CD8-positive, alpha-beta T cell (primary cell): ENCODE measurements at regions of chr11 and their contacts with region 1.

Region 1: GRCh38 chr11:47152953-47153950 is 23.4 kb downstream of the ARFGAP2 start:
- DNase-seq: peak in 7 of 9 experiments; percentile 21 to 74 (median 58)
- ATAC-seq: peak; percentile 55
- H3K4me3 ChIP-seq: no peak overlapping the region
- H3K4me3 Mint-ChIP-seq: peak overlapping the region; percentile 67
- H3K27ac ChIP-seq: peak overlapping the region; percentile 32 to 56
- H3K27ac Mint-ChIP-seq: peak overlapping the region; percentile 84
- H3K4me1 ChIP-seq: peaks cover 45% of the 10 kb centered on the region
- H3K4me1 Mint-ChIP-seq: peaks cover 35% of the 10 kb centered on the region
- H3K27me3 ChIP-seq: no peaks in the 10 kb centered on the region
- H3K27me3 Mint-ChIP-seq: no peaks in the 10 kb centered on the region
- CTCF ChIP-seq: peak; percentile 90

Region 2: DNA sequence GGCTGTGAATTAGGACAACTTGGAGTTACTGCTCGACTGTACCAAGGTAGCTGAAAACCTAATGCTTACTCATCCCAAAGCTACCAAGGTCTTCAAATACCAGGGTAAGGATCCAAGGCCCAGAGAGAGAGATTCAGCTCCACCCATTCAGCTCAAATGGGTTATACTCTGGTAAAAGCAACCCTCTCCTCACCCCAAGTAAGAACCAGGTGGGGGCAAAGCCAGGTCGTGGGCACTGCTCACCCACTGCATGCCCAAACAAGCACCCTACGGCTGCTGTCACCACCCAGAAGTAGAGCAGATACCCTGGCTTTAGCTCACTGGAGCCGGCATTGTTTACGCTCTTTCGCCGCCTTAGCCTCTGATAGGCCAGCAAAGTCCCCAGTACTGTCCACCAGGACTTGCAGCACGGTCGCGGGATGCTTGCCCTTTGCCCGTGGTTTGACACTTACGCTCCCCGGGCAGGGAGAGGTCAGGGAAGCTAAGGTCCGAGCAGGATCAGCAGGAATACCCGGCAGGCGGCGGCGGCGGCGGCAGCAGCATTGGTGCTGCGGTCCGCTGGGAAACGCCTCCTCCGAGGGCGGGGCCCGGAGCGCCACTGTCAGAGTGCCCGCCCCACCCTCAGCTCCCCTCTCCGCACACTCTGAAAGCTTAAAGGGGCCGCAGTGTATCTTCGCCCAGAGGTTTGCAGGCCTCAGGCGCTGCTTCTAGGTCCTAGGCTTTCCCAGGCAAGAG is 326.8 kb before region 1 on chr11:
- CTCF ChIA-PET with region 1: no interaction called
- POLR2A ChIA-PET with region 1: no interaction called
- intact Hi-C with region 1: loop called in 1 of 2 experiments (anchors 10 kb)
- DNase-seq: peak; percentile 41 to 82 (median 75)
- ATAC-seq: peak; percentile 100
- H3K4me3 ChIP-seq: peak overlapping the region; percentile 57 to 60
- H3K4me3 Mint-ChIP-seq: peak overlapping the region; percentile 84
- H3K27ac ChIP-seq: no peak overlapping the region
- H3K27ac Mint-ChIP-seq: peak overlapping the region; percentile 32
- H3K4me1 ChIP-seq: peaks cover 16% of the 10 kb centered on the region
- H3K4me1 Mint-ChIP-seq: peaks cover 34% of the 10 kb centered on the region
- H3K27me3 ChIP-seq: no peaks in the 10 kb centered on the region
- H3K27me3 Mint-ChIP-seq: no peaks in the 10 kb centered on the region
- CTCF ChIP-seq: no peak

Region 3: GRCh38 chr11:46889689-46890475 is 263.4 kb before region 1 on chr11:
- CTCF ChIA-PET with region 1: interaction called, 60 read pairs
- POLR2A ChIA-PET with region 1: interaction called, 3 read pairs
- intact Hi-C with region 1: loop called in 1 of 2 experiments (anchors 1 kb)
- DNase-seq: peak; percentile 51 to 84 (median 78)
- ATAC-seq: peak; percentile 97
- H3K4me3 ChIP-seq: no peak overlapping the region
- H3K4me3 Mint-ChIP-seq: no peak overlapping the region
- H3K27ac ChIP-seq: no peak overlapping the region
- H3K27ac Mint-ChIP-seq: peak overlapping the region; percentile 60
- H3K4me1 ChIP-seq: no peaks in the 10 kb centered on the region
- H3K4me1 Mint-ChIP-seq: peaks cover 3% of the 10 kb centered on the region
- H3K27me3 ChIP-seq: no peaks in the 10 kb centered on the region
- H3K27me3 Mint-ChIP-seq: no peaks in the 10 kb centered on the region
- CTCF ChIP-seq: peak; percentile 80

Region 4: GRCh38 chr11:46896719-46897406 is 256.4 kb before region 1 on chr11:
- CTCF ChIA-PET with region 1: interaction called, 48 read pairs
- POLR2A ChIA-PET with region 1: no interaction called
- intact Hi-C with region 1: no loop called
- DNase-seq: peak in 2 of 9 experiments; percentile 27
- ATAC-seq: no peak
- H3K4me3 ChIP-seq: no peak overlapping the region
- H3K4me3 Mint-ChIP-seq: no peak overlapping the region
- H3K27ac ChIP-seq: no peak overlapping the region
- H3K27ac Mint-ChIP-seq: no peak overlapping the region
- H3K4me1 ChIP-seq: no peaks in the 10 kb centered on the region
- H3K4me1 Mint-ChIP-seq: no peaks in the 10 kb centered on the region
- H3K27me3 ChIP-seq: no peaks in the 10 kb centered on the region
- H3K27me3 Mint-ChIP-seq: no peaks in the 10 kb centered on the region
- CTCF ChIP-seq: no peak

Region 5: GRCh38 chr11:46916286-46917108 is 236.8 kb before region 1 on chr11:
- CTCF ChIA-PET with region 1: interaction called, 28 read pairs
- POLR2A ChIA-PET with region 1: interaction called, 8 read pairs
- intact Hi-C with region 1: no loop called
- DNase-seq: peak in 3 of 9 experiments; percentile 17 to 49 (median 28)
- ATAC-seq: peak; percentile 43
- H3K4me3 ChIP-seq: peak overlapping the region; percentile 25 to 38
- H3K4me3 Mint-ChIP-seq: peak overlapping the region; percentile 67
- H3K27ac ChIP-seq: no peak overlapping the region
- H3K27ac Mint-ChIP-seq: no peak overlapping the region
- H3K4me1 ChIP-seq: peaks cover 22% of the 10 kb centered on the region
- H3K4me1 Mint-ChIP-seq: peaks cover 30% of the 10 kb centered on the region
- H3K27me3 ChIP-seq: peaks cover 29 to 31% of the 10 kb centered on the region in 2 experiments
- H3K27me3 Mint-ChIP-seq: peaks cover 57% of the 10 kb centered on the region
- CTCF ChIP-seq: no peak

Region 6: DNA sequence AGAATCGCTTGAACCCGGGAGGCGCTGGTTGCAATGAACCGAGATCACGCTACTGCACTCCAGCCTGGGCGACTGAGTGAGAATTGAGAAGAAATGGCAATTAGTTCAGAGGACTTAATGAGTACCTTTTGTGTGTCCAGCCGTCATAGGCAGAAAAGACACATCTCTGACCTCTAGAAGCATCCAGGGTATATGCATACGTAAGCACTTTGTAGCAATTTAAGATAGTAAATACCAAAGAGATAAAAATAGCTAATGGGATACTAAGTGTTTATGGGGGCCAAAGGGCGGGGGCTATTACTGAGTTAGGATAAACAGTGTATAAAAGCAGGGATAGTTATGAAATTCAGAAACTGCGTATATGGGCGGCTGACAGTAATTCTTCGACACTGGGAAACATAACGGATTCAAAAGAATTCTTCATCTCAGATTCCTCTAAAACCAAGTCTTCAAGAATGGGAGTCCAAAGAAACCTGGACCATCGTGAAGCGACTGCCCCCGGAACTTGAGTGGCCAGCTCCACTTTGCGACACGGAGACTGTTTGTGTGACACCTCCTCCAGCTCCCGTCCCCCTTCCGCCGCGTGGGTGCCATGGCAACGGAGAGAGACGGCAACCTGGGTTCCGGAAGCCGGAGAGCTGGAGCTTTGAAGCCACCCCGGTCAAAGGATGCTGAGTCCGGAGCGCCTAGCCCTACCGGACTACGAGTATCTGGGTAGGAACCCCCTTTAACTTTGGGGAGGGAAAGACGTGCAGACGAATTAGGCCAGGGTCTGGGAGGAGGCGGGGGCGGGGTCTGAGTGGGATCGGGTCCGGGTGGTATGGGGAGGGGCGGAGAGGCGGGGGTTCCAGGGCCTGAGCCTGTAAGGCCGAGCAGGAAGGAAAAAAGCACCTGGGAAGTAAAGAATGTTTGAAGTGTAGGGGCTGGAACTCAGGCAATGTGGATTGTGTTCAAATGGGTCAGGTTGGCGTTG is 216.8 kb before region 1 on chr11 and contains the start of gene CSTPP1:
- CTCF ChIA-PET with region 1: interaction called, 6 read pairs
- POLR2A ChIA-PET with region 1: interaction called, 14 read pairs
- intact Hi-C with region 1: loop called (anchors 5 kb)
- DNase-seq: peak; percentile 80 to 97 (median 93)
- ATAC-seq: peak; percentile 96
- H3K4me3 ChIP-seq: peak within 1 kb of the TSS; percentile 73 to 82
- H3K4me3 Mint-ChIP-seq: peak within 1 kb of the TSS; percentile 97
- H3K27ac ChIP-seq: peak within 1 kb of the TSS; percentile 58 to 71
- H3K27ac Mint-ChIP-seq: peak within 1 kb of the TSS; percentile 95
- H3K4me1 ChIP-seq: peaks cover 9% of the 10 kb centered on the region
- H3K4me1 Mint-ChIP-seq: peaks cover 20% of the 10 kb centered on the region
- H3K27me3 ChIP-seq: no peaks in the 10 kb centered on the region
- H3K27me3 Mint-ChIP-seq: peaks cover 6% of the 10 kb centered on the region
- CTCF ChIP-seq: no peak
- total RNA-seq, gene CSTPP1: 4.1 to 4.6 TPM

Region 7: GRCh38 chr11:47130543-47130942 is 22.7 kb before region 1 on chr11:
- CTCF ChIA-PET with region 1: interaction called, 16 read pairs
- POLR2A ChIA-PET with region 1: no interaction called
- intact Hi-C with region 1: no loop called
- DNase-seq: no peak
- ATAC-seq: no peak
- H3K4me3 ChIP-seq: no peak overlapping the region
- H3K4me3 Mint-ChIP-seq: no peak overlapping the region
- H3K27ac ChIP-seq: no peak overlapping the region
- H3K27ac Mint-ChIP-seq: no peak overlapping the region
- H3K4me1 ChIP-seq: no peaks in the 10 kb centered on the region
- H3K4me1 Mint-ChIP-seq: no peaks in the 10 kb centered on the region
- H3K27me3 ChIP-seq: no peaks in the 10 kb centered on the region
- H3K27me3 Mint-ChIP-seq: no peaks in the 10 kb centered on the region
- CTCF ChIP-seq: no peak